ENCODE measurements at regions of chr1 and their contacts with region 1.

Region 1: GRCh38 chr1:55140546-55140983 is 74.6 kb downstream of the USP24 start:
- DNase-seq: peak; percentile 84
- H3K4me3 ChIP-seq: no peak overlapping the region
- H3K27ac ChIP-seq: no peak overlapping the region
- H3K4me1 ChIP-seq: no peaks in the 10 kb centered on the region
- H3K27me3 ChIP-seq: no peaks in the 10 kb centered on the region
- CTCF ChIP-seq: peak; percentile 74

Region 2: DNA sequence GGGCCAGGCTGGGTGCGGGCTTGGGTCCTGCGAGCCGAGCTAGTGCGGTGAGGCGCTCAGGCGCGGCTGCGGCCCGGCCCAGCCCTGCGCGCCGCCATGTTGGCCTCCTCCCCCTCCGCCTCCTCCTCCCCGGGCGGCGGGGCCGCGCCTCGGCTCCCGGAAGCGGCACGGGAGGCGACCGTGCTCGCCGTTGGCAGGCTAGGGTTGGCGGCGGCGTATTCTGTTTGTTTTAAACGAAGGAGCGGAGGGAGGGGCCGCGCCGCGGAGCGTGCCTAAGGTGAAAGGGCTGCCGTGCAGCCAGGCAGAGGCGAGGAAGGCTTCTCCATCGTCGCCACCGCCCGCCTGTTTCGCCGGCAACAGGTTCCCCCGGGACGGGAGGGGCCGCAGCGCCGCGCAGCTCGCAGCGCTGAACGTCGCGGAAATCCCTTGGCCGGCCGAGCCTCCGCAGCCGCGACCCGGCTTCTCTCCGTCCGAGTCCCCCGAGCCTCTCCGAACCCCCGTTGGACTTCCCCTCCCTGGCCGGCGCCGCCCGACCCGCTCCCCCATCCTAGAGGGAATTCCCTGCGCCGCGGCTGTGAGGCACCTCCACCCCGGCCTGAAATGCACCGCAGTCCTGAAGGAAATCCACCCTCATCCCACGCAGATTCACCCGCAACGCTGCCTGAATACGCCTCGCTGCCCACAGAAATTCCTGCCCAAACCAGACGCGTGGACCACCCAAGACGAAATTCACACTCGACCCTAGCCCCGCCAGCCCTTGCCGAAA is 74.9 kb after region 1 on chr1 and contains the start of gene USP24:
- intact Hi-C with region 1: loop called (anchors 10 kb)
- DNase-seq: peak; percentile 89
- H3K4me3 ChIP-seq: peak within 1 kb of the TSS; percentile 74
- H3K27ac ChIP-seq: peak within 1 kb of the TSS; percentile 89
- H3K4me1 ChIP-seq: peaks cover 14% of the 10 kb centered on the region
- H3K27me3 ChIP-seq: no peaks in the 10 kb centered on the region
- CTCF ChIP-seq: no peak
- total RNA-seq, gene USP24: 31.8 to 34.9 TPM

Region 3: DNA sequence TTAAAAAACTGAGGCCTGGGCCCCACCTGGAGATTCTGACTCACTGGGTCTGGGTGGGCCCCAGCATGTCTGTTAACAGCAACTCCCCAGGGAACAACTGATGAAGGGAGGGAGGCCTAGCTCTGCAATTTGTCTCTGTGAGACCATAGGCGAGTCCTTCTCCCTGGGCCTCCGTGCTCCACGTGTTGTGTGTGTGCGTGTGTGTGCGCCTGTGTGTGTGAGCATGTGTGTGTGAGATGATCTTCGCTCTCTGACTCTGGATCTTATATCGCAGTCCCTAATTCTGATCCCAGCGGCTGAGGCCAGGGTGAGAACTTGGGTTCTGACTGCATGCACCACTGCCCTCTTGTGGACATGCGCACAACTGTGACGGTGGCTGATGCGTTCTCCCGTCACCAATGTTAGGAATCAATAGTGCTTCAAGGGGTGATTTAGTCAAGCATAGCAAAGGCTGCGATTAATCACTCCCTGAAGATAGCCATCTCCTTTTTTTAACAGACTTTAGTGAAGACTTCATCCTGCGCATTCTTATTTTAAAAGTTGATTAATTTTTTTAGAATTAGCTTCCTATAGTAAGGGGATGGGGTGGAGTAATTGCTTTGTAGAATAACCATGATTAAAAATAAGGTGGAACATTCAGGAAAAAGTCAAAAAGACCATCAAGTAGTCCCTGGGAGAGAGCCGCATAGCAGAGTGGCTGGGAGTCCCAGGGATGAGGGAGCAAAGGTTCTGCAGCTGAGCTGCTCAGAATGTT is 137.0 kb after region 1 on chr1:
- intact Hi-C with region 1: loop called (anchors 2 kb)
- DNase-seq: peak; percentile 81
- H3K4me3 ChIP-seq: no peak overlapping the region
- H3K27ac ChIP-seq: no peak overlapping the region
- H3K4me1 ChIP-seq: no peaks in the 10 kb centered on the region
- H3K27me3 ChIP-seq: no peaks in the 10 kb centered on the region
- CTCF ChIP-seq: peak; percentile 77